ENCODE measurements at regions of chr11 and their contacts with region 1.

Region 1: GRCh38 chr11:75308118-75308517 is 43.3 kb downstream of the ARRB1 start:
- DNase-seq: no peak
- H3K4me3 ChIP-seq: no peak overlapping the region
- CTCF ChIP-seq: no peak
- POLR2A ChIP-seq: no peak

Region 2: GRCh38 chr11:73883856-73884255 is 1424.3 kb before region 1 on chr11:
- intact Hi-C with region 1: loop called (anchors 5 kb)
- DNase-seq: no peak
- H3K4me3 ChIP-seq: no peak overlapping the region
- CTCF ChIP-seq: no peak
- POLR2A ChIP-seq: no peak

Measured in lower leg skin (tissue), 4 donors.